Spleen (tissue), 13 donors: ENCODE measurements at regions of chr17 and their contacts with region 1.

Region 1: GRCh38 chr17:9522074-9522473 is 53.5 kb downstream of the STX8 start:
- DNase-seq: no peak
- H3K4me3 ChIP-seq: no peak overlapping the region
- H3K27ac ChIP-seq: no peak overlapping the region
- H3K4me1 ChIP-seq: peaks cover 0 to 15% (median 0%) of the 10 kb centered on the region in 6 donors
- H3K27me3 ChIP-seq: no peaks in the 10 kb centered on the region
- CTCF ChIP-seq: peak in 9 of 11 experiments; percentile 10 to 67 (median 36)
- POLR2A ChIP-seq: no peak

Region 2: GRCh38 chr17:8991514-8992285 is 530.4 kb before region 1 on chr17:
- intact Hi-C with region 1: loop called (anchors 10 kb)
- DNase-seq: no peak
- H3K4me3 ChIP-seq: no peak overlapping the region
- H3K27ac ChIP-seq: no peak overlapping the region
- H3K4me1 ChIP-seq: peaks cover 0 to 11% (median 0%) of the 10 kb centered on the region in 6 donors
- H3K27me3 ChIP-seq: peaks cover 0 to 26% (median 0%) of the 10 kb centered on the region in 7 donors
- CTCF ChIP-seq: peak in 10 of 11 experiments; percentile 33 to 83 (median 70)
- POLR2A ChIP-seq: no peak

Region 3: GRCh38 chr17:9402590-9403199 is 119.4 kb before region 1 on chr17:
- intact Hi-C with region 1: loop called (anchors 5 kb)
- DNase-seq: no peak
- H3K4me3 ChIP-seq: no peak overlapping the region
- H3K27ac ChIP-seq: no peak overlapping the region
- H3K4me1 ChIP-seq: no peaks in the 10 kb centered on the region
- H3K27me3 ChIP-seq: no peaks in the 10 kb centered on the region
- CTCF ChIP-seq: peak in 8 of 11 experiments; percentile 34 to 59 (median 50)
- POLR2A ChIP-seq: no peak

Region 4: DNA sequence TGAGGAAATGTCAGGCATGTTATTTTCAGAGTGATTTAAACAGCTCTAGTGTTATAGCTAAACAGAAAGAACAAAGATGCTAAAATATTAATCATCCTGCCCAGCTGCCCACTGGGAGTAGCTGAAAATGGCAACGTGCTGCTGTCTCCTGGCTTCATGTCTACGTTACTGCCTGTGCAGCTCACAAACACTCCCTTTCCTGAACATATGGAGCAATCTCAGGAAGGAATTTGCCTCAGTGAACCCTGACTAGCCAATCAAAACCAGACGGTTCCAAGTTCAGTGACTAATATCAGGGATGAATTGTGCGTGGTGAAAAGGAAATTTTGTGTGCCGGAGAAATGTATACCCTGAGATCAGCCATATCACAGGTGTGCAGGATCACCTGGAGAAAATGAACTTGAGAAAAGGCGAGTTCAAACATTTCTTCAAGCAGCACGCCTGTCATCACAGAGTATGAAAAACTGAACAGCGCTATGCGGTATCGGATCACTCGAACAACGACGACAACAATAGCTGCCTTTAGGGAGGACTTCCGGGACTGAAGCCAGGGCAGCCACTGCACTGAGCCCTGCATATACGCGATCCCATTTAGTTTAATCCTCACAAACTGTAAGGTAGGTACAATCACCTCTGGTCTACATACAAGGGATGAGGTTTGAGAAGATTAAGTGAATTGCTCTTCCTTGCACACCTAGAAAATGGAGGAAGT is 56.7 kb before region 1 on chr17:
- intact Hi-C with region 1: no loop called
- DNase-seq: no peak
- H3K4me3 ChIP-seq: no peak overlapping the region
- H3K27ac ChIP-seq: no peak overlapping the region
- H3K4me1 ChIP-seq: peaks cover 5 to 39% (median 18%) of the 10 kb centered on the region in 6 donors
- H3K27me3 ChIP-seq: no peaks in the 10 kb centered on the region
- CTCF ChIP-seq: no peak
- POLR2A ChIP-seq: no peak